ENCODE measurements at regions of chr1 and their contacts with region 1.

Region 1: DNA sequence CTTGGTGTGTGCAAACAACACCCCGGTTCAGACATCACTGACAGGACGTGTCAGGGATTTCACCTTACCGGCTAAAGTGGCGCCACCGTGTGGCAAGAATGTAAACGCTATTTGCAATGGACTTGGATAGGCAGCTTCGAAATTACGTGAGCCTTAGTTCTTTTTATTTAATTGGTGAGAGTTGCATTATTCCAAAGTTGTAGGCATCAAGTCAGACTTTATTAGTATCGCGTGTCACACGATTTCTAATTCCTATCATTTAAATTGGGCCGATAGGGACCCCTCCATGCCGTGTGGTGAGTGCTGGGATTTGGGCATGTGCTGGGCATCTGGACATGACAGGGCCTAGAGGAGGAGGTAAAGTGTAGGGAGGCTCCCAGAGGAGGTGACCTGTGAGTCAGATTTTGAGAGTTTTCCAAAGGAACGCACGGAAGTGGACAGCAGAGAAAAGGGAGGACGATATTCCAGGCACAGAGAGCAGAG is 14.5 kb upstream of the CPT2 start:
- DNase-seq: peak; percentile 78 to 89 (median 84)
- H3K4me3 ChIP-seq: no peak overlapping the region
- H3K27ac ChIP-seq: no peak overlapping the region
- H3K4me1 ChIP-seq: peaks cover 0 to 2% (median 0%) of the 10 kb centered on the region in 4 experiments
- H3K27me3 ChIP-seq: peaks cover 0 to 17% (median 4%) of the 10 kb centered on the region in 5 experiments

Region 2: GRCh38 chr1:52904927-52905698 is 277.0 kb before region 1 on chr1:
- CTCF ChIA-PET with region 1: interaction called, 16 read pairs
- POLR2A ChIA-PET with region 1: interaction called, 3 read pairs
- DNase-seq: peak; percentile 24 to 57 (median 55)
- H3K4me3 ChIP-seq: no peak overlapping the region
- H3K27ac ChIP-seq: no peak overlapping the region
- H3K4me1 ChIP-seq: no peaks in the 10 kb centered on the region
- H3K27me3 ChIP-seq: no peaks in the 10 kb centered on the region

Region 3: GRCh38 chr1:53196485-53197270 is 14.5 kb after region 1 on chr1 and contains the start of gene CPT2:
- CTCF ChIA-PET with region 1: interaction called, 11 read pairs
- POLR2A ChIA-PET with region 1: interaction called, 4 read pairs
- DNase-seq: peak; percentile 90 to 93 (median 93)
- H3K4me3 ChIP-seq: peak within 1 kb of the TSS; percentile 78 to 97 (median 86)
- H3K27ac ChIP-seq: peak within 1 kb of the TSS; percentile 88 to 94
- H3K4me1 ChIP-seq: peaks cover 10 to 25% (median 21%) of the 10 kb centered on the region in 4 experiments
- H3K27me3 ChIP-seq: no peaks in the 10 kb centered on the region

Measured in common myeloid progenitor, CD34-positive (primary cell).